PC-3 (cell line): ENCODE measurements at regions of chr5 and their contacts with region 1.

Region 1: DNA sequence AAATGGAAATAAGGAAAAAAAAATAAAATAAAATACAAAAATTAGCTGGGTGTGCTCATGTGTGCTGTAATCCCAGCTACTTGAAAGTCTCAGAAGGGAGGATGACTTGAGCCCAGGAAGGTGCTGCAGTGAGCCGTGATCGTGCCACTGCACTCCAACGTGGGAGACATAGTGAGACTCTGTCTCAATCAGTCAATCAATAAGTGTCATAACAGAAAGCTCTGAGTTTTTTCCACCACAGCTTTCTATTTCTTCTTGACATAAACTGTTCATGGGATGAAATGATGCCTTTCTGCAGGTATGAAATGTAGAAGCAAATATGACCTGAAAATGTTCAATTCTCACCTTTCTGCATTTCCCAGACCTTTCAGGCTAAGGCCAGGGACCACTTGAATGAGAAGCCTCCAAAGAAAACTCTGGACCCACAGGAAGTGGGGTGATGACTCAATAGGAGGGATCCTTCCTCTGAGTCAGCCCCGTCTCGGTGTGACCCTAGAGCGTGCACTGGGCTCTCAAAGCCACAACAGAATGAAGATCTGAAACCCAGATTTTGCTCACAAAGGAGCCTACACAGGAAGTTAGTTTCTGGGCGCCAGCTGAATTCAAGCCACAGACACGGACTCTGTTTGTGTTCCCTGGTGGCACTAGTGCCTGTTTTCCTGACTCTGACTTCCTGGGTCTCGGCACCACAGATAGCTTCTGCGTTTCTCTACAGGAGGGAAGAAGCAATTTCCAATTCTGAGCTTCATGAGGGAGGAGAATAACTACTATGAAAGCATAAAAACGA is 62.0 kb downstream of the ANKH start:
- DNase-seq: peak; percentile 93
- ATAC-seq: peak; percentile 95
- H3K4me3 ChIP-seq: peak overlapping the region; percentile 17; the same call in 1 of the 2 replicates
- H3K27ac ChIP-seq: peak overlapping the region; percentile 78
- H3K4me1 ChIP-seq: peaks cover 25% of the 10 kb centered on the region
- H3K27me3 ChIP-seq: no peaks in the 10 kb centered on the region
- CTCF ChIP-seq: no peak

Region 2: DNA sequence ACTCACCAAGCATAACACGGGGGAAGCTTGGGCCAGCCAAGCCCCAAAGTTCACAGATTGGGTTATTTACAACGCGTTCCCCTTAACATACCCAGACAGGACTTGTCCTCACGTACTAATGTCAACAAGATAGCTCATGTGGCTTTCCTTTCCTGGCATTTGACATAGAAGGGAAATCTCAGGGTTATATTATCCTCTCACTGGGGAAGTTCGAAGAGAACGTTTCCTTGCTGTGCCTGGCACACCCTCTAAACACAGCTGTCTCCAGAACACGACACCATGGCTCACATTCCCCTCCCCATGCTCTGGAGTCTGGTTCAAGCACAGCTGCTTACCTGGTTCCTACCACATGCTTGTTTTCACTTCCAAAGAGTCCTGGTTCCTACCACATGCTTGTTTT is 274.8 kb before region 1 on chr5:
- CTCF ChIA-PET with region 1: no interaction called
- POLR2A ChIA-PET with region 1: no interaction called
- intact Hi-C with region 1: no loop called
- DNase-seq: no peak
- ATAC-seq: no peak
- H3K4me3 ChIP-seq: no peak overlapping the region
- H3K27ac ChIP-seq: no peak overlapping the region
- H3K4me1 ChIP-seq: no peaks in the 10 kb centered on the region
- H3K27me3 ChIP-seq: no peaks in the 10 kb centered on the region
- CTCF ChIP-seq: no peak

Region 3: GRCh38 chr5:14743601-14744295 is 65.8 kb before region 1 on chr5:
- CTCF ChIA-PET with region 1: no interaction called
- POLR2A ChIA-PET with region 1: no interaction called
- intact Hi-C with region 1: loop called (anchors 10 kb)
- DNase-seq: peak; percentile 71
- ATAC-seq: peak; percentile 68
- H3K4me3 ChIP-seq: no peak overlapping the region
- H3K27ac ChIP-seq: peak overlapping the region; percentile 51
- H3K4me1 ChIP-seq: peaks cover 40% of the 10 kb centered on the region
- H3K27me3 ChIP-seq: no peaks in the 10 kb centered on the region
- CTCF ChIP-seq: no peak

Region 4: GRCh38 chr5:14871210-14872069 is 61.9 kb after region 1 on chr5 and contains the start of gene ANKH:
- CTCF ChIA-PET with region 1: no interaction called
- POLR2A ChIA-PET with region 1: no interaction called
- intact Hi-C with region 1: loop called (anchors 10 kb)
- DNase-seq: peak; percentile 83
- ATAC-seq: peak; percentile 87
- H3K4me3 ChIP-seq: peak within 1 kb of the TSS; percentile 78
- H3K27ac ChIP-seq: no peak within 1 kb of the TSS
- H3K4me1 ChIP-seq: peaks cover 20% of the 10 kb centered on the region
- H3K27me3 ChIP-seq: peaks cover 40% of the 10 kb centered on the region
- CTCF ChIP-seq: no peak
- total RNA-seq, gene ANKH: 10.9 and 11.6 TPM in 2 replicates

Region 5: GRCh38 chr5:14988223-14988622 is 178.7 kb after region 1 on chr5:
- CTCF ChIA-PET with region 1: no interaction called
- POLR2A ChIA-PET with region 1: no interaction called
- intact Hi-C with region 1: no loop called
- DNase-seq: no peak
- ATAC-seq: no peak
- H3K4me3 ChIP-seq: no peak overlapping the region
- H3K27ac ChIP-seq: no peak overlapping the region
- H3K4me1 ChIP-seq: no peaks in the 10 kb centered on the region
- H3K27me3 ChIP-seq: no peaks in the 10 kb centered on the region
- CTCF ChIP-seq: no peak